ENCODE measurements at regions of chr5 and their contacts with region 1.

Region 1: DNA sequence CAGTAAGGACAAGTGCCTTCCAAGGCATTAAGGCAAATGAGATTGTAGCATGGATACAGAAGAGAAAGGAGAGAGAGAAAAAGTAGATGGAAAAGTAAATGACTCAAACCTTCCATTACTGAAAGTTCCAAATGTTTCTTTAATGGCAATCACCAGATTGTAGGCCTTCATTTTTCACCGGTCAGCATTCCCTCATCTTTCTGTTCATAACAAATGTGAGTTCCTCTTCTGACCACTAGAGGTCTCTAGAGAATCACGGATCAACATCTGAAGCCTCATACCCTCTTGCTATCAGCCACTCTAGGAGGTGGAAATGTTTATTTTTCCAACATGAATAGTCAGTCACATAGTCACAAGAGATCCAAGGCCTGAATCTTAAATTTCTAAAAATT is 73.6 kb upstream of the RPS23 start:
- DNase-seq: peak in 1 of 2 donors; percentile 79
- ATAC-seq: peak; percentile 73 to 87 (median 84)
- H3K4me3 ChIP-seq: no peak overlapping the region
- H3K4me3 Mint-ChIP-seq: no peak overlapping the region
- H3K27ac ChIP-seq: no peak overlapping the region
- H3K27ac Mint-ChIP-seq: no peak overlapping the region
- H3K4me1 ChIP-seq: peaks cover 7% of the 10 kb centered on the region
- H3K4me1 Mint-ChIP-seq: peaks cover 12 to 21% of the 10 kb centered on the region in 2 donors
- H3K27me3 ChIP-seq: no peaks in the 10 kb centered on the region
- H3K27me3 Mint-ChIP-seq: no peaks in the 10 kb centered on the region
- CTCF ChIP-seq: peak; percentile 91

Region 2: DNA sequence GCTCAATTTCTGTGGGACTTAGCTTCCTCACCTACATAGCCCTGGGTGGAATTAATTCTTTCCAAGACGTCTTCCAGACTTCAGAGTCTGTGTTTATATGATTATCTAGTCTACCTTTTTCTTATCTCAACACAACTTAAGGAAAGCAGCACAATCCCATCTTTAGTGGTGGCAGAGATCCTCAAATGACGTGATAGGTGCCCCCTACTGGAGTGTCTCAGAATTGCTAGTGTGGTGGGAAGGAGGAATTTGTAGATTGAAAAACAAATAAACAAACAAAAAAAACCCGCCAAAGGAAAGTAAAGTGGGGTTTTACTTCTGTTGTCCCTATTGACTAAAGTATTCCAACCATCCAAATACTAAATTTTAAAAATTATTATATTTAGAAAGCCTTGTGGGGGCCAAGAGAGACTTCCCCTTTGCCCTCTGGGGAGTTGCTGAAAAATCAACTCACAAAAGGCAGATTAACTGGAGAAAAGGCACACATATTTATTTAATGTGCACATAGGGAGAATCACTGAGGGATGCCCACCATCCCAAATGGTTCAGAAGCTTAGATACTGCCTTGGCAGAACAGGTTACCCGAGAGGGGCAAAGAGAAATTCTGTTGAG is 442.2 kb after region 1 on chr5:
- intact Hi-C with region 1: loop called (anchors 1 kb)
- DNase-seq: peak in 1 of 2 donors; percentile 60
- ATAC-seq: peak in 1 of 3 donors; percentile 66
- H3K4me3 ChIP-seq: no peak overlapping the region
- H3K4me3 Mint-ChIP-seq: no peak overlapping the region
- H3K27ac ChIP-seq: no peak overlapping the region
- H3K27ac Mint-ChIP-seq: no peak overlapping the region
- H3K4me1 ChIP-seq: no peaks in the 10 kb centered on the region
- H3K4me1 Mint-ChIP-seq: no peaks in the 10 kb centered on the region
- H3K27me3 ChIP-seq: no peaks in the 10 kb centered on the region
- H3K27me3 Mint-ChIP-seq: peaks cover 0 to 12% of the 10 kb centered on the region in 2 donors
- CTCF ChIP-seq: peak; percentile 92

Region 3: DNA sequence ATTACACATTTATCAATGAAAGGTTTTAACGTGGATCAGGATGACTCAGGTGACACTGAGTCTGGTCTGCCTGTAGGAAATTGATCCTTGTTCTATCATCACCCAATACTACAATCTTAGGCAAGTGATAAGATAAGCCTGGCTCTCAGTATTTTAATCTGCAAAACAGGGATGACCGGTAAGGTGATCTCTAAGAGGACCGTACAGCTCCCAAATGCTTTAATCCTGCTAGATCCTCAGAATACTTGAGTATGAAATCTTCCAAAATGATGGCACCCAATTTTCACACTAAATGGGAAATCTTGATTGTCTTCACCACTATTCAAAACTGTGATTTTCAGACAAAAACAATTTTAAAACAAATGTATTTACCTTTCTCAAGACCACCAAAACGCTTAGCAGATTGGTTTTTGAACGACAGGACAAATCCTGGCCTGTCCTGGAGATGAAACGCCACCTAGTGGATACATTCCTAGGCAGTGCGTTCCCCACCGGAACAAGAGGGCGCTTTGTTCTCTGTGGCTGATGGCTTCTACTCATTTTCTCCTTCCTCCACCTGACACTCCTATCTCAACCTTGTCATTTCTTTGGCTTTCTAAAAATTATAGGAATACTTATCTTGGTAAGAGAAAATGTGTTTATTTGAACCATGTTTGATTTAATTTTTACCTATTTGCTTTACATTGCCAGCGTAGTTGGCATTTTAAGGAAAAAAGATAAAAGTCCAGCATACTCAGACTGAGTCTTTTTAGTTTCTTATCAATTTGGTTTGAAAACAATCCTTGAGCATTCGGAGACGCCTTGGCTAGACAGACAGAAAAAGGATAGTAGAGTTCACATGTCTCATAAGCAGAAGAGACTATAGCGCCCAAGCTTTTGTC is 1078.6 kb after region 1 on chr5:
- intact Hi-C with region 1: loop called (anchors 2 kb)
- DNase-seq: peak in 1 of 2 donors; percentile 71
- ATAC-seq: peak in 2 of 3 donors; percentile 77 to 81
- H3K4me3 ChIP-seq: no peak overlapping the region
- H3K4me3 Mint-ChIP-seq: no peak overlapping the region
- H3K27ac ChIP-seq: no peak overlapping the region
- H3K27ac Mint-ChIP-seq: no peak overlapping the region
- H3K4me1 ChIP-seq: no peaks in the 10 kb centered on the region
- H3K4me1 Mint-ChIP-seq: no peaks in the 10 kb centered on the region
- H3K27me3 ChIP-seq: no peaks in the 10 kb centered on the region
- H3K27me3 Mint-ChIP-seq: no peaks in the 10 kb centered on the region
- CTCF ChIP-seq: peak; percentile 65

Region 4: DNA sequence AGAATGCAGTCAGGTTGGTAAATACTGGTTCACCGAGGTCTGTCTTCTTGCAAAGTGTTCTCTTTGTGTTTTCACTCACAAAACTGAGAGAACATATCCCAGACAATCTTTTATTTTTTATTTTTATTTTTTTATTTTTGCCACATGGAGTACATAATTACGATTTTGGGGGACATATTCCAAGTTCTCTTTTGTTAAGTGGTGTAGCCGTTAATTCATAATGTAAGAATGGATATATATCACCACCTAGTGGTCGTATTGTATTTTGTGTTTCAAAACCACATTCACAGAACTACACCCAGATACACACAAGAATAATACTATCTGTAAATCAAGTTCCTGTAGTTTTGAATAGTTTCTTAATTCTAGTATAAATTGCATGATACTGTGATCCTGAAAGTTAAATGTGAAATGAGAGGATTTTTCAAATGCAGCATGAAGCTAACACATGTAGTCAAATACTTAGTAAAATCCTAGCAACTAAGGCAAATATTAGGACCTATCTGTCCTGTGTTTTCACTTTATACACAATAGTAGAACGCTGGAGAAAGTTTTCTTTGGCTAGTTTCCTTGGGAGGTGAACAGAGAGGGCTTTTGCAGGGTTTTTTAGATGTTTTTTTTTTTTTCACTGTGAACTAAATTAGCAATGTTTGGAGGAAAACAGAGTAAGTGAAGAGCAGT is 1212.5 kb after region 1 on chr5:
- intact Hi-C with region 1: loop called (anchors 2 kb)
- DNase-seq: peak in 1 of 2 donors; percentile 58
- ATAC-seq: peak in 1 of 3 donors; percentile 52
- H3K4me3 ChIP-seq: no peak overlapping the region
- H3K4me3 Mint-ChIP-seq: no peak overlapping the region
- H3K27ac ChIP-seq: no peak overlapping the region
- H3K27ac Mint-ChIP-seq: no peak overlapping the region
- H3K4me1 ChIP-seq: no peaks in the 10 kb centered on the region
- H3K4me1 Mint-ChIP-seq: no peaks in the 10 kb centered on the region
- H3K27me3 ChIP-seq: no peaks in the 10 kb centered on the region
- H3K27me3 Mint-ChIP-seq: peaks cover 5 to 37% of the 10 kb centered on the region in 2 donors
- CTCF ChIP-seq: peak; percentile 55